Psoas muscle (tissue), 8 donors: ENCODE measurements at regions of chr12 and their contacts with region 1.

Region 1: DNA sequence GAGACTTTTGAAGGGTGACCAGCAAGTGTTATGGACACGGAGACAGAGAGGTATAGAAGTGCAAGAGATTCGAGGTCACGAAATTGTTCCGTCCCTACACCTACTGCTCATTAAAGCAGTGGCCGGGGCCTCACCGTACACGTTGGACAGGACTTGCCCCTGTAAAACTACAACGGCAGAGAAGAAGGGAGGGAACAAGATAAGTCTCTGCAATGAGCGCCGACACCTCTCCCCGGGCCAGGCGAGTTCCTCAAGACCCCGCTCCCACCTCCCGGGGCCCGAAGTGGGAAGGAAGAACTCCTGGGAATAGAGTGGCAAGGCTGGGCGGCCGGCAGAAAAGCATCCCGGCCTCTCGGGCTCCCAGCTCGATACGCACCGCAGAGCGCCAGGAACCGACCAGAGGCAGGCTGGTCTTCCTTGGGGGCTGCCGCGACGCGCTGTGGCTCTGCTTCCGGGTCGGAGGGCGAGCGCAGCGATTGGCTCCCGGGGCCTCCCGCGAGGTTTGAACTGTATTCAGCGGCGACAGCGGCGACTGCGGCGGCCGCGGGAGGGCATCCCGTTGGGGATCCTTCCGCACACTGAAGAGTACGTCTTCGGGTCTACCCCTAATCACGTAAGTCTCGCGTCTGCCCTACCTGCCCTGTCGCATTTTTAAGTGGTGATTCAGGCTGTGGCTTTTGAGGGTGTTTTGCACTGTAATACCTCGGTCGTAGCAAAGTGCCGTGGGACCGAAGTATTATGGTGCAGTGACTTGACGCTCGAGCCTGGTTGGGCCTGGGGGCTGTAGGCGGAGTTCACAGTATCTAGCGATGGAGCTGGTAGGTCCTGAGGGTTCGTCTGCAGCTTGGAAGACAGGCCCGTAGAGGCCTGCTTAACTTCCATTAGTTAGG is at the starts of genes NUP37 and PARPBP:
- DNase-seq: peak; percentile 90 to 95
- ATAC-seq: peak; percentile 100
- H3K4me3 ChIP-seq: peak within 1 kb of the TSS; percentile 91
- H3K27ac ChIP-seq: peak within 1 kb of the TSS; percentile 92
- H3K4me1 ChIP-seq: peaks cover 18% of the 10 kb centered on the region
- H3K27me3 ChIP-seq: no peaks in the 10 kb centered on the region
- CTCF ChIP-seq: peak; percentile 6
- total RNA-seq, gene NUP37: 12.5 to 20.7 (median 17.4) TPM
- total RNA-seq, gene PARPBP: 0.60 to 0.76 (median 0.70) TPM

Region 2: GRCh38 chr12:102061560-102062418 is 58.1 kb before region 1 on chr12 and contains the start of gene WASHC3:
- intact Hi-C with region 1: loop called (anchors 5 kb)
- DNase-seq: peak; percentile 96 to 97
- ATAC-seq: peak; percentile 97 to 99 (median 98)
- H3K4me3 ChIP-seq: peak within 1 kb of the TSS; percentile 76
- H3K27ac ChIP-seq: peak within 1 kb of the TSS; percentile 83
- H3K4me1 ChIP-seq: no peaks in the 10 kb centered on the region
- H3K27me3 ChIP-seq: no peaks in the 10 kb centered on the region
- CTCF ChIP-seq: no peak
- total RNA-seq, gene WASHC3: 30.5 to 33.5 (median 31.9) TPM